ENCODE measurements at regions of chr1 and their contacts with region 1.

Region 1: GRCh38 chr1:32240140-32240951 is 6.7 kb upstream of the FAM167B start:
- DNase-seq: peak; percentile 85 to 96
- H3K4me3 ChIP-seq: peak overlapping the region; percentile 65 to 91 (median 68)
- H3K27ac ChIP-seq: peak overlapping the region; percentile 55
- H3K4me1 ChIP-seq: peaks cover 0 to 7% (median 3%) of the 10 kb centered on the region in 4 experiments; a peak in 3 of 7 replicates
- H3K27me3 ChIP-seq: no peaks in the 10 kb centered on the region; a peak in 1 of 7 replicates
- CTCF ChIP-seq: peak in 2 of 3 experiments; percentile 16 to 27; a peak in 3 of 4 replicates
- EP300 ChIP-seq: no peak
- POLR2A ChIP-seq: peak in 1 of 2 experiments; percentile 73; a peak in 2 of 3 replicates
- RAD21 ChIP-seq: peak in 1 of 2 experiments; percentile 13; a peak in 1 of 4 replicates

Region 2: GRCh38 chr1:31781756-31782371 is 458.5 kb before region 1 on chr1:
- CTCF ChIA-PET with region 1: no interaction called
- POLR2A ChIA-PET with region 1: no interaction called
- DNase-seq: no peak
- H3K4me3 ChIP-seq: no peak overlapping the region
- H3K27ac ChIP-seq: no peak overlapping the region; the same call in 1 of the 2 replicates
- H3K4me1 ChIP-seq: peaks cover 0 to 21% (median 18%) of the 10 kb centered on the region in 4 experiments; a peak in 6 of 7 replicates
- H3K27me3 ChIP-seq: no peaks in the 10 kb centered on the region; a peak in 2 of 7 replicates
- CTCF ChIP-seq: no peak
- EP300 ChIP-seq: no peak
- POLR2A ChIP-seq: no peak
- RAD21 ChIP-seq: no peak

Region 3: DNA sequence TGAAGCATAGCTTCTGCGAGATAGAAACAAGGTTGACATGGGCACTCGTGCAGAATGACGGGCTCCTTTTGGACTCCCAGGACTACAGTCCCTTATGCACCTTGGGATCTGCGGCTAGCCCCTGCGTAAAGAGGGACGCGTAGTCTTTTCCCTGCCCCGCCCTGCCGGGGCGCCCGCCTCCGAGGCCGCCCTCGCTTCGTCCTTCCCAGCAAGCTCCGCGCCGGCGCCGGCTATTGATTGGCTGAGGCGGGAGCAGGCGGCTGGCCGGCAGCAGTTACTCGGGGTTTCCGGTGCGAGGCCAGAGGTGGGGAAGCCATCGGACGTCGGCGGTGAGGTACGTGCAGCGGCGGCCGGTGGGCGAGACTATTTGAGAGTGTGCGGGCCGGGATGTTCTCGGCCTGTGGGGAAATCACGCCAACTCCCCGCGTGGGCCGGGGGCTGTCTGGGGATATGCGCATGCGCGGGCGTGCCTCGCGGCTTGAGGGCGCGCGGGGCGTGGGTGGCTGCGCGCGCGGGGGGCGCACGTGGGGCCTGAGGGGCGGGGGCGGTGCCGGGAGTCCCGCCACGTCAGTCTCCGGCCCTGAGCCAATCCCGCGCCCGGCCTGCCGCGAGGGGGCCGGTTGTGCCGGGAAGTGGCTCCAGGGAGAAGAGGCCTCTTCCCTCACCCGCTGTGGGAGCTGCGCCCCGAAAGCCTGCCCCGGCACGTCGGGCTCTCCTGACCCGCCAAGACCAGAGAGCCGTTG is 60.7 kb before region 1 on chr1 and contains the start of gene TXLNA:
- CTCF ChIA-PET with region 1: interaction called, 3 read pairs
- POLR2A ChIA-PET with region 1: interaction called, 12 read pairs
- DNase-seq: peak; percentile 77 to 95
- H3K4me3 ChIP-seq: peak within 1 kb of the TSS; percentile 44 to 89 (median 76)
- H3K27ac ChIP-seq: peak within 1 kb of the TSS; percentile 69; the same call in 1 of the 2 replicates
- H3K4me1 ChIP-seq: peaks cover 8 to 15% (median 10%) of the 10 kb centered on the region in 4 experiments; a peak in 6 of 7 replicates
- H3K27me3 ChIP-seq: no peaks in the 10 kb centered on the region
- CTCF ChIP-seq: no peak
- EP300 ChIP-seq: no peak
- POLR2A ChIP-seq: peak; percentile 58 to 86
- RAD21 ChIP-seq: no peak
- total RNA-seq, gene TXLNA: 45.4 and 46.9 TPM in 2 replicates

Region 4: GRCh38 chr1:32221980-32222755 is 18.2 kb before region 1 on chr1 and contains the starts of genes EIF3I and TMEM234:
- CTCF ChIA-PET with region 1: interaction called, 70 read pairs
- POLR2A ChIA-PET with region 1: interaction called, 52 read pairs
- DNase-seq: peak in 1 of 2 experiments; percentile 92
- H3K4me3 ChIP-seq: peak within 1 kb of the TSS; percentile 66 to 97 (median 88)
- H3K27ac ChIP-seq: peak within 1 kb of the TSS; percentile 83
- H3K4me1 ChIP-seq: peaks cover 0 to 7% (median 2%) of the 10 kb centered on the region in 4 experiments; a peak in 3 of 7 replicates
- H3K27me3 ChIP-seq: no peaks in the 10 kb centered on the region
- CTCF ChIP-seq: no peak
- EP300 ChIP-seq: no peak
- POLR2A ChIP-seq: peak in 1 of 2 experiments; percentile 77; a peak in 1 of 3 replicates
- RAD21 ChIP-seq: no peak
- total RNA-seq, gene EIF3I: 243 and 247 TPM in 2 replicates
- total RNA-seq, gene TMEM234: 8.9 TPM in 2 replicates

Region 5: DNA sequence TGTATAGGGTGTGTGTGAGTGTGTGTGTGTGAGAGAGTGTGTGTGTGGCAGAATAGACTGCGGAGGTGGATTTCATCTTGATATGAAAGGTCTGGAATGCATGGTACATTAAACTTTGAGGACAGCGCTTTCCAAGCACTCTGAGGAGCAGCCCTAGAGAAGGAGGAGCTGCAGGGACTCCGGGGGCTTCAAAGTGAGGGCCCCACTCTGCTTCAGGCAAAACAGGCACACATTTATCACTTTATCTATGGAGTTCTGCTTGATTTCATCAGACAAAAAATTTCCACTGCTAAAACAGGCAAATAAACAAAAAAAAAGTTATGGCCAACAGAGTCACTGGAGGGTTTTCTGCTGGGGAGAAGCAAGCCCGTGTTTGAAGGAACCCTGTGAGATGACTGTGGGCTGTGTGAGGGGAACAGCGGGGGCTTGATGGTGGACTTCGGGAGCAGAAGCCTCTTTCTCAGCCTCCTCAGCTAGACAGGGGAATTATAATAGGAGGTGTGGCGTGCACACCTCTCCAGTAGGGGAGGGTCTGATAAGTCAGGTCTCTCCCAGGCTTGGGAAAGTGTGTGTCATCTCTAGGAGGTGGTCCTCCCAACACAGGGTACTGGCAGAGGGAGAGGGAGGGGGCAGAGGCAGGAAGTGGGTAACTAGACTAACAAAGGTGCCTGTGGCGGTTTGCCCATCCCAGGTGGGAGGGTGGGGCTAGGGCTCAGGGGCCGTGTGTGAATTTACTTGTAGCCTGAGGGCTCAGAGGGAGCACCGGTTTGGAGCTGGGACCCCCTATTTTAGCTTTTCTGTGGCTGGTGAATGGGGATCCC is 33.3 kb after region 1 on chr1:
- CTCF ChIA-PET with region 1: interaction called, 3 read pairs
- POLR2A ChIA-PET with region 1: interaction called, 27 read pairs
- DNase-seq: peak; percentile 77
- H3K4me3 ChIP-seq: peak overlapping the region; percentile 30 to 56 (median 38)
- H3K27ac ChIP-seq: no peak overlapping the region
- H3K4me1 ChIP-seq: peaks cover 6 to 33% (median 19%) of the 10 kb centered on the region in 4 experiments
- H3K27me3 ChIP-seq: no peaks in the 10 kb centered on the region
- CTCF ChIP-seq: peak in 1 of 3 experiments; percentile 10; a peak in 1 of 4 replicates
- EP300 ChIP-seq: no peak
- POLR2A ChIP-seq: peak in 1 of 2 experiments; percentile 67; a peak in 2 of 3 replicates
- RAD21 ChIP-seq: no peak

Region 6: GRCh38 chr1:32321712-32322291 is 81.5 kb after region 1 on chr1:
- CTCF ChIA-PET with region 1: interaction called, 7 read pairs
- POLR2A ChIA-PET with region 1: interaction called, 14 read pairs
- DNase-seq: no peak
- H3K4me3 ChIP-seq: no peak overlapping the region
- H3K27ac ChIP-seq: no peak overlapping the region
- H3K4me1 ChIP-seq: no peaks in the 10 kb centered on the region
- H3K27me3 ChIP-seq: no peaks in the 10 kb centered on the region
- CTCF ChIP-seq: no peak
- EP300 ChIP-seq: no peak
- POLR2A ChIP-seq: no peak
- RAD21 ChIP-seq: no peak